Adrenal gland (tissue), 19 donors: ENCODE measurements at regions of chr13 and their contacts with region 1.

Region 1: GRCh38 chr13:110819203-110820014 is 95.5 kb downstream of the ANKRD10 start:
- DNase-seq: peak; percentile 69 to 91 (median 83)
- H3K4me3 ChIP-seq: no peak overlapping the region
- H3K27ac ChIP-seq: no peak overlapping the region
- H3K4me1 ChIP-seq: peaks cover 0 to 7% of the 10 kb centered on the region in 2 donors
- H3K27me3 ChIP-seq: no peaks in the 10 kb centered on the region
- CTCF ChIP-seq: peak; percentile 92 to 99 (median 96)
- POLR2A ChIP-seq: no peak

Region 2: GRCh38 chr13:110593430-110594130 is 225.8 kb before region 1 on chr13:
- intact Hi-C with region 1: loop called (anchors 5 to 10 kb)
- DNase-seq: peak in 6 of 7 donors; percentile 26 to 59 (median 41)
- H3K4me3 ChIP-seq: no peak overlapping the region
- H3K27ac ChIP-seq: no peak overlapping the region
- H3K4me1 ChIP-seq: no peaks in the 10 kb centered on the region
- H3K27me3 ChIP-seq: no peaks in the 10 kb centered on the region
- CTCF ChIP-seq: peak; percentile 51 to 86 (median 75)
- POLR2A ChIP-seq: no peak

Region 3: GRCh38 chr13:110680851-110681250 is 138.6 kb before region 1 on chr13:
- intact Hi-C with region 1: loop called in 1 of 2 experiments (anchors 10 kb)
- DNase-seq: peak in 1 of 7 donors; percentile 45
- H3K4me3 ChIP-seq: no peak overlapping the region
- H3K27ac ChIP-seq: no peak overlapping the region
- H3K4me1 ChIP-seq: no peaks in the 10 kb centered on the region
- H3K27me3 ChIP-seq: no peaks in the 10 kb centered on the region
- CTCF ChIP-seq: peak in 4 of 6 experiments; percentile 9 to 39 (median 24)
- POLR2A ChIP-seq: no peak

Region 4: GRCh38 chr13:110715395-110716235 is 103.8 kb before region 1 on chr13:
- intact Hi-C with region 1: loop called (anchors 10 kb)
- DNase-seq: peak; percentile 97 to 100 (median 99)
- H3K4me3 ChIP-seq: peak overlapping the region; percentile 76 to 87 (median 82)
- H3K27ac ChIP-seq: peak overlapping the region; percentile 95 to 100 (median 99)
- H3K4me1 ChIP-seq: peaks cover 6 to 30% of the 10 kb centered on the region in 2 donors
- H3K27me3 ChIP-seq: no peaks in the 10 kb centered on the region
- CTCF ChIP-seq: peak in 2 of 6 experiments; percentile 25 to 38
- POLR2A ChIP-seq: peak; percentile 50 to 83

Region 5: DNA sequence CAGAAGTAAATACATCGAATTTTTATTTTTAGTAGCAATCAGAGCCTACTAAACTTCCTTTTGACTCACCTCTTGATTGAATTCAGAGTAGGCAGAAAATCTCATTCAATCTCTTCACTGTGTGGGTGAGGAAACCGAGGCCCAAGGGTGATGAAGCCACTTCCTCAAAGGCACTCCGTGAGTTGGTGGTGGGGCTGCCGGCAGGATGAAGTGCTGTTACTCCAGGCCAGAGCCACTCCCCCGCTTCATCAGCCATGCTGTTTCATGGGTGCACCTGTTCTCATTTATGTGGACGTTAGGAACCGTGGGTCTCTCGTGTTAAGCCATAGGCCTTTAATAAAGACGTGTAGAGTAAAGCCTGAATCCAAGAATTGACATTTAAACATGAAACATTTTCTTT is 92.7 kb before region 1 on chr13:
- intact Hi-C with region 1: loop called in 1 of 2 experiments (anchors 10 kb)
- DNase-seq: no peak
- H3K4me3 ChIP-seq: no peak overlapping the region
- H3K27ac ChIP-seq: no peak overlapping the region
- H3K4me1 ChIP-seq: no peaks in the 10 kb centered on the region
- H3K27me3 ChIP-seq: no peaks in the 10 kb centered on the region
- CTCF ChIP-seq: no peak
- POLR2A ChIP-seq: no peak

Region 6: DNA sequence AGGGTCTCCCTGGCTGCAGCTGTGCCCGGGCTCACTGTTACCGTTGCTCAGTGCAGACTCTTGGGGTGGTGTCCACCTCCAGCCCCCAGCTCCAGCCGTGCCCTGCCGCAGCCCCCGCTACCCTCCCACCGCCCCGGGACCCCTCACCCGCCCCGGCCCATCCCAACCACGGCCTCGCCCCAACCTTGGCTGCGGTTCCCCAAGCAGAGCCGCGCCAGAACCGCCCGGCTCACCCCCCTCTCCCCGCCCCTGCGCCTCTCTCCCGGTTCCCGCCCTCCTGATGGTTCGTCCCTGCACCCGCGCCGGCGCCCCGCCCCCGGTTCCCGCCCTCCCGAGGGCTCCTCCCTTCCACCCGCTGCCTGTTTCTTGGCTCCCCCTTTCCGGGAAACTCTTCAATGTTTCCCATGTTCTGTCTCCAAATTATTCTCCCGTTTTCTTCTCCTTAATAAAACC is 55.1 kb after region 1 on chr13:
- intact Hi-C with region 1: no loop called
- DNase-seq: peak; percentile 86 to 93 (median 88)
- H3K4me3 ChIP-seq: peak overlapping the region in 2 of 4 donors; percentile 8 to 51
- H3K27ac ChIP-seq: no peak overlapping the region
- H3K4me1 ChIP-seq: peaks cover 8 to 22% of the 10 kb centered on the region in 2 donors
- H3K27me3 ChIP-seq: no peaks in the 10 kb centered on the region
- CTCF ChIP-seq: no peak
- POLR2A ChIP-seq: no peak